Pancreas (tissue), 10 donors: ENCODE measurements at regions of chr6 and their contacts with region 1.

Region 1: GRCh38 chr6:3281631-3282475 is 23.1 kb downstream of the PSMG4 start:
- DNase-seq: peak in 1 of 6 donors; percentile 25
- ATAC-seq: no peak
- H3K4me3 ChIP-seq: no peak overlapping the region
- H3K27ac ChIP-seq: no peak overlapping the region
- H3K4me1 ChIP-seq: peaks cover 0 to 3% (median 0%) of the 10 kb centered on the region in 3 donors
- H3K27me3 ChIP-seq: no peaks in the 10 kb centered on the region
- CTCF ChIP-seq: no peak

Region 2: DNA sequence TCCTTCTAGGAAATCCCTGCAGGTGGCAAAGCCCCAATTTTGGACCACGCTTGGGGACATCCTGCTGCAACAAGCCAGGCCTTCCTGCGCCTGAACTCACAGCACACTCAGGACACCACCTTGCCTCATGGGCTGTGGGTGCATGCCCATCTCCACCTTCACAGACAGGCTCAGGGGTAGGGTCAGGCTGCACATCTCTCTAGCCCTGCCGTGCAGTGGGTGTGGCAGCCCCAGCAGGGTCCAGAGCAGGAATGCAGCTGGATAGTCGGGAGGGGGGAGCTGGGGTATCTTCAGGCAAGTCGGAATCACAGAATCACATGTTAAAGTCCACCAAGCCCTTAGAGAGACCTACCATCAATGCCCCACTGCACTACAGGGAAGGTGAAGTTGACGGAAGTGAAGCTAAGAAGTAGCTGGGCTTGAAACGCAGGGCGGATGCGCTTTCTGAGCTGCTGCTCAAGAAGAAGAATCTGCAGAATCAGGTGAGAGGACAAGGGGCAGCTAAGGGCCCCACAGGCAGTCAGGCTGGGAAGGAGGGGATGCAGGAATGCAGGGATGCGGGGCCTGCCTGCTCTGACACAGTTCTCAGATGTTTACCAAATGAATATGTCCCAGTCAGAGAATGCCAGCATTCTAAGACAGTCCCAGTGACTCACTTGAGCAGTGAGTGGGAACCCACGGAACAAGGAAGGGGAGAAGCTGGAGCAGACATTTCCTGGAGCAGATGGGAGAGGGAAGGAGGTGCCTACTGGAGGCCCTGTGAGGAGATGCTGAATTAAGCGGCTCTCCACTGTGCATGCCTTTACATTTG is 321.7 kb before region 1 on chr6:
- intact Hi-C with region 1: no loop called
- DNase-seq: peak in 2 of 6 donors; percentile 29 to 55
- ATAC-seq: peak; percentile 5 to 35 (median 8)
- H3K4me3 ChIP-seq: peak overlapping the region in 2 of 4 donors; percentile 46 to 48
- H3K27ac ChIP-seq: peak overlapping the region; percentile 81 to 89 (median 86)
- H3K4me1 ChIP-seq: peaks cover 8 to 32% (median 30%) of the 10 kb centered on the region in 3 donors
- H3K27me3 ChIP-seq: no peaks in the 10 kb centered on the region
- CTCF ChIP-seq: no peak

Region 3: GRCh38 chr6:3341467-3341866 is 59.6 kb after region 1 on chr6:
- intact Hi-C with region 1: no loop called
- DNase-seq: no peak
- ATAC-seq: peak in 1 of 4 donors; percentile 29
- H3K4me3 ChIP-seq: no peak overlapping the region
- H3K27ac ChIP-seq: peak overlapping the region in 1 of 4 donors; percentile 36
- H3K4me1 ChIP-seq: peaks cover 4 to 34% (median 34%) of the 10 kb centered on the region in 3 donors
- H3K27me3 ChIP-seq: no peaks in the 10 kb centered on the region
- CTCF ChIP-seq: no peak

Region 4: GRCh38 chr6:3518356-3519225 is 236.7 kb after region 1 on chr6:
- intact Hi-C with region 1: loop called in 1 of 3 experiments (anchors 10 kb)
- DNase-seq: no peak
- ATAC-seq: peak in 2 of 4 donors; percentile 36 to 69
- H3K4me3 ChIP-seq: no peak overlapping the region
- H3K27ac ChIP-seq: no peak overlapping the region
- H3K4me1 ChIP-seq: no peaks in the 10 kb centered on the region
- H3K27me3 ChIP-seq: no peaks in the 10 kb centered on the region
- CTCF ChIP-seq: no peak

Region 5: DNA sequence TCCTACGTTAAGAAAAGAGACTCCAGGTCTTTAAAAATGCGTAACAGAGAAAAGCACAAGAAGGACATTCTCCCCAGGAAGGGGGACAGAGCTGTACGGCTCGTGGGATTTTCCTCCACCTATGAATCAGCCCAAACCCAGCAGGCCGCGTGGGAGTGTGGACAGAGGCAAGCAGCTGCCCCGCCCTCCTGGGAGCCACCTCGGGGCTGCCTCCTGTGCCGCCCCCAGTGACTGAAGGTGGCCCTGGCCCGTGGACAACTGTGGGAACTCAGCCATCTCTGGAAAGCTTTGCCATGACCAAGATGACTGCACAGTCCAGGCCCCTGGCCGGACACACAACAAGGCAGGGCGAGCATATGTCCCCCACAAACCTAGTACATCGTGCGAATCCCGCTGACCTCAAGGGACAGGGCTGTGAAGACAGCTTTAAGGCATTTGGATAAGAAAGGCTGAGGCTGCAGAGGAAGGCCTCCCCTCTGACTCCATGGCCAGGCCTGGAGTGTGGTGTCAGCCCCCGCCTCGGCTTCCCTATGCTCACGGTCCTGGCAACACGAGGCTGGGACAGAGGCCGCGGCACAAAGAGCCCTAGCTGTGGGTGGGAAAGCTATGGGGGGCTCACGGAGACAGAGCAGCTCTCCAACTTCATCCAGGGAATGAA is 442.7 kb after region 1 on chr6:
- intact Hi-C with region 1: loop called in 1 of 3 experiments (anchors 5 kb)
- DNase-seq: no peak
- ATAC-seq: peak in 2 of 4 donors; percentile 15 to 32
- H3K4me3 ChIP-seq: no peak overlapping the region
- H3K27ac ChIP-seq: no peak overlapping the region
- H3K4me1 ChIP-seq: no peaks in the 10 kb centered on the region
- H3K27me3 ChIP-seq: no peaks in the 10 kb centered on the region
- CTCF ChIP-seq: no peak

Region 6: DNA sequence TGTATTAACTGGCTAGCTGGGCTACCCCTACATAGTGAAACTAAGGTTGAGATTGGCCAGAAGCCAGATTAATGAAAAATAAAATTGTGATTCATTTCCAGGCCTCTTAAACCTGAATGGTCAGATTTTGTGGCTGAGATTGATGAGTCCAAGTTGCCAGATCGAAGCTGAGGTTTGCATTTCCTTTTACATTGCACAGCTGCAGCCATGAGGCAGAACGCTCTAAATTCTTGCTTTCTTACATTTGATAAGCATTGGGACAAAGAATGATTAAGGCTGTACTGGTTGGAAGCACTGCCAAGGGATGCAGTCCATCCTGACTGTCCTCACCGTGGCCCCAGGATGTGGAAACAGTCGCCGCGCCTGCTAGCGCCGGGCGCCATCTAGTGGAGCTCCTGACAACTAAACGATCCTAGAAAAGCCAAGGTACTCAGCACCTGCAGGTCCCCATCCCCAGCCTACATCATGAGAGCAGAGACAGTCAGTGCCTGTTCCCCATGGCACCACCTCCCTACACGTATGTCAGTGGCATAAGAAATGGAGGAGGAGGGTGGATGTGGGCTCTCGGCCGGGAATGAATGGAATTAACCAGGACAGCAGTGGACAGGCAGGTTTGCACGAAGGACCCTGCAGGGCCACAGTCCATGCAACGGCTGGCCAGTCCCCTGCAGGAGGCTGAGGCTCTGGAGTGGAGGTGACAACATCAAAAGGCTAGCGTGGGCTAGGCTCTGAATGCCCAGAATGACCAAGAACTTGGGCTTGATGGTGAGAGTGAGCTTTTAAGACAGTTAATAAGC is 450.7 kb after region 1 on chr6:
- intact Hi-C with region 1: loop called (anchors 5 kb)
- DNase-seq: peak; percentile 61 to 88 (median 76)
- ATAC-seq: peak; percentile 81 to 96 (median 94)
- H3K4me3 ChIP-seq: no peak overlapping the region
- H3K27ac ChIP-seq: no peak overlapping the region
- H3K4me1 ChIP-seq: peaks cover 0 to 3% (median 2%) of the 10 kb centered on the region in 3 donors
- H3K27me3 ChIP-seq: no peaks in the 10 kb centered on the region
- CTCF ChIP-seq: peak; percentile 52 to 82 (median 80)